ENCODE measurements at regions of chr2 and their contacts with region 1.

Region 1: GRCh38 chr2:224357098-224357901 is 44.6 kb downstream of the FAM124B start:
- DNase-seq: peak; percentile 11
- ATAC-seq: peak; percentile 93
- H3K4me3 ChIP-seq: no peak overlapping the region
- H3K27ac ChIP-seq: no peak overlapping the region
- H3K4me1 ChIP-seq: no peaks in the 10 kb centered on the region
- H3K27me3 ChIP-seq: no peaks in the 10 kb centered on the region; a peak in 2 of 4 replicates
- CTCF ChIP-seq: peak; percentile 63 to 88 (median 68); a peak in 5 of 6 replicates
- EP300 ChIP-seq: no peak
- POLR2A ChIP-seq: no peak
- RAD21 ChIP-seq: peak; percentile 90

Region 2: GRCh38 chr2:224449212-224450147 is 92.2 kb after region 1 on chr2:
- CTCF ChIA-PET with region 1: interaction called, 3 read pairs
- POLR2A ChIA-PET with region 1: no interaction called
- RAD21 ChIA-PET with region 1: no interaction called
- SMC1A ChIA-PET with region 1: no interaction called
- in situ Hi-C with region 1: no loop called
- intact Hi-C with region 1: loop called (anchors 2 kb)
- DNase-seq: no peak
- ATAC-seq: peak; percentile 79
- H3K4me3 ChIP-seq: no peak overlapping the region
- H3K27ac ChIP-seq: no peak overlapping the region
- H3K4me1 ChIP-seq: no peaks in the 10 kb centered on the region
- H3K27me3 ChIP-seq: no peaks in the 10 kb centered on the region; a peak in 1 of 4 replicates
- CTCF ChIP-seq: peak; percentile 53 to 70 (median 61)
- EP300 ChIP-seq: no peak
- POLR2A ChIP-seq: no peak
- RAD21 ChIP-seq: peak; percentile 34; the same call in 1 of the 2 replicates

Region 3: GRCh38 chr2:224778474-224778877 is 421.2 kb after region 1 on chr2:
- CTCF ChIA-PET with region 1: interaction called, 6 read pairs
- POLR2A ChIA-PET with region 1: no interaction called
- RAD21 ChIA-PET with region 1: interaction called, 4 read pairs
- SMC1A ChIA-PET with region 1: interaction called, 4 read pairs
- in situ Hi-C with region 1: loop called (anchors 5 kb)
- intact Hi-C with region 1: loop called (anchors 1 kb)
- DNase-seq: peak; percentile 39
- ATAC-seq: peak; percentile 91
- H3K4me3 ChIP-seq: no peak overlapping the region
- H3K27ac ChIP-seq: no peak overlapping the region
- H3K4me1 ChIP-seq: no peaks in the 10 kb centered on the region
- H3K27me3 ChIP-seq: no peaks in the 10 kb centered on the region
- CTCF ChIP-seq: peak; percentile 67 to 79 (median 77)
- EP300 ChIP-seq: no peak
- POLR2A ChIP-seq: no peak
- RAD21 ChIP-seq: peak; percentile 82

Region 4: GRCh38 chr2:225008935-225009334 is 651.6 kb after region 1 on chr2:
- CTCF ChIA-PET with region 1: no interaction called
- POLR2A ChIA-PET with region 1: no interaction called
- RAD21 ChIA-PET with region 1: no interaction called
- SMC1A ChIA-PET with region 1: no interaction called
- in situ Hi-C with region 1: loop called (anchors 25 kb)
- intact Hi-C with region 1: loop called (anchors 5 kb)
- DNase-seq: no peak
- ATAC-seq: peak; percentile 70
- H3K4me3 ChIP-seq: no peak overlapping the region
- H3K27ac ChIP-seq: peak overlapping the region; percentile 65
- H3K4me1 ChIP-seq: peaks cover 24% of the 10 kb centered on the region
- H3K27me3 ChIP-seq: no peaks in the 10 kb centered on the region
- CTCF ChIP-seq: peak; percentile 46 to 61 (median 61)
- EP300 ChIP-seq: no peak
- POLR2A ChIP-seq: no peak
- RAD21 ChIP-seq: peak; percentile 69